ENCODE measurements at regions of chr5 and their contacts with region 1.

Region 1: DNA sequence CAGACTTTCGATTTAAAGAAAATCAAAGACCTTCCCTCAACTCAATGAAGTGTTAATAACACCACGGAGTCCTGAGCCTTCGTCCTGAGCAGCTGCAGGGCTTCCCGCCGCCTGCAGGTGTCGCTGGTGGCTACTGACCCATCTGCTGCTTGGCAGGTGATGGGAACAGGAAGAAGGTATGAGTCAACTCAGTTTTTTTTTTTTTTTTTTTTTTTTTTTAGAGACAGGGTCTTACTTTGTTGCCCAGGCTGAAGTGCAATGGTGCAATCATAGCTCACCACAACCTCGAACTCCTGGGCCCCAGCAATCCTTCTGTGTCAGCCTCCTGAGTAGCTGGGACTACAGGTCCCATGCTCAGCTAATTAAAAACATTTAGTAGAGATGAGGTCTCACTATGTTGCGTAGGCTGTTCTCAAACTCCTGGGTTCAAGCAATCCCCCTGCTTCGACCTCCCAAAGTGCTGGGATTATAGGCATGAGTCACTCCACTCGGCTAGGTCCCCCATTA is 185.7 kb upstream of the IL12B start:
- DNase-seq: no peak

Region 2: GRCh38 chr5:159331093-159331973 is 184.6 kb before region 1 on chr5:
- intact Hi-C with region 1: loop called (anchors 10 kb)
- DNase-seq: peak; percentile 85

Region 3: GRCh38 chr5:159552751-159553150 is 36.8 kb after region 1 on chr5:
- intact Hi-C with region 1: no loop called
- DNase-seq: no peak

Region 4: DNA sequence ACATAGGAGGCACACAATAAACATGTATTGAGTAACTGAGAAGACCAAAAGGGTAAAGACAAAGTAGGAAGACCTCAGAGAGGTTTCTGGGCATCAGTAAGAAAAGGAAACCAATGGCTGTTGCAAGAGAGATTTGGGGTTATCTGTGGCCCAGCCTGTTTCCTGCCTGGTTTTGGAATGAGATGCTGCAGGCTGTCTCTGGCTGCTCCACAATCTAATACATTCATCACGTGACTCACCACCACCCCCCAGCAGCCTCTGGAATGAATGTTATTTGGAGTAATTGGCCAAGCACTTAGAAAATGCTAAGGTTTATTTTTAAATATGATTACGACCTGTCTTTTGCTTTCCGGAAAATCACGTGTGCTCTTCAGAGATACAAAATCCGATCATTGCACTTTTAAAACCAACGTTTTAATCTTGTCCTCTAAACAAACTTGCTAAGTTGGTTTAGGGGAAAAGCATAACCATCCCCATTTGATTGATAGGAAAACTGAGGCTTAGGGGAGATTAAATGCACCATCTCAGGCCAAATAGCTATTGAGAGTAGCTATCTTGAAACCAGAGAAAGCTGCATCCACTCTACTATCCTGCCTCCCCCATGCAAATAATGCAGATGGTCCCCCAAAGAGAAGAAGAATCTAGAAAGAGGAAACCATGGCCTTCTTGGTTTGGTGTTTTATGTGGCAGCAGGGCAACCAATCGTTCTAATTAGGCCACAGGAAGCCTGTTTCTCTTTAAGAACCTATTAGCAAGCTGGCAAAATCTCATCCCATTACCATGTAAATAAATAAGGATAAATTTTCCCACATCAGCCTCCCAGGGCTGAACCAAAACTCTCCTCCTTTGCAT is 248.5 kb after region 1 on chr5:
- intact Hi-C with region 1: loop called (anchors 5 kb)
- DNase-seq: no peak

Region 5: DNA sequence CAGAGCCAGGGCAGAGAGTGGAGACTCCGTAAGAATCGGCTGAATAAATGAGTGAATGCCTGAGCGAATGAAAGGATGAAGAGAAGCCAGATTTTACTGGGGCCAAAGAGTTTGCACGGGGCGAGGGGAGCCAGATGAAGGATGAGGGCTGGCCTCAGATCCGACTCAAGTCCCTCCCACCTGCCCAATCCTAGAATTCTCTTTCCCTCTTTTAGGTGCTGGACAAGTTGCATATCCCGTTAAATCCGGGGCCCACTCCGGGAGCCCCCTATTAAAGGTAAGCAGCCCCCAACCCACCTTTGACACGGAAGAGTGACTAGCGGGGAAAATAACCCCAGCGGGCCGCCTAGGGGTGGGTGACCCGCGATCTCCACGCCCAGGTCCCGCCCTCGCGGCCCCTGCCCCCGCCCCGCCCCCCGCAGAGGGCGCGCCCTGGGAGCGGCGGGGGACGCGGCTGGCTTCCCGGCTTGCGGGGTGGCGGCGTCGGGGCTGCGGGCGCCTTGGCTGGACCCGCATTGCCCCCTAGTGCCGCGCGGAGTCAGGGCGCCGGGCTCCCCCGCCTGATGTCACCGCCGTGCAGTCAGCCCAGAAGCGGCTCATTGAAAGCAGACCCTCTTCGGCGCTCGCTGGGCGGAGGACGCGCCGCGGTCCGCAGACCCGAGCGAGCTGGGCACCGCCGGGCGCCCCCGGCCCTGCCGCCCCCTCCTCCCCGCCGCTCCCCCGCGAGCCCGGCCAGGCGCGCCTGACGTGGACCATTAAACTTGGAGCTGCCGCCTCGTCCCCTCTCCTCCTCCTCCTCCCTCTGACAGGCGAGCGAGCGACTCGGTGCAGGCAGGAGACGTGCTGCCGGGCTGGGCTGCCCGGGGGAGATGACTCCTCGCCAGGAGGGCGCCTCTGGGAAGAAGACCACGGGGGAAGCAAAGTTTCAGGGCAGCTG is 400.2 kb after region 1 on chr5 and contains the start of gene ADRA1B:
- intact Hi-C with region 1: loop called (anchors 5 kb)
- DNase-seq: peak; percentile 84
- total RNA-seq, gene ADRA1B: 4.9 TPM

Region 6: GRCh38 chr5:159965031-159965837 is 449.3 kb after region 1 on chr5:
- intact Hi-C with region 1: loop called (anchors 5 kb)
- DNase-seq: peak; percentile 74